ENCODE measurements at regions of chr5 and their contacts with region 1.

Region 1: DNA sequence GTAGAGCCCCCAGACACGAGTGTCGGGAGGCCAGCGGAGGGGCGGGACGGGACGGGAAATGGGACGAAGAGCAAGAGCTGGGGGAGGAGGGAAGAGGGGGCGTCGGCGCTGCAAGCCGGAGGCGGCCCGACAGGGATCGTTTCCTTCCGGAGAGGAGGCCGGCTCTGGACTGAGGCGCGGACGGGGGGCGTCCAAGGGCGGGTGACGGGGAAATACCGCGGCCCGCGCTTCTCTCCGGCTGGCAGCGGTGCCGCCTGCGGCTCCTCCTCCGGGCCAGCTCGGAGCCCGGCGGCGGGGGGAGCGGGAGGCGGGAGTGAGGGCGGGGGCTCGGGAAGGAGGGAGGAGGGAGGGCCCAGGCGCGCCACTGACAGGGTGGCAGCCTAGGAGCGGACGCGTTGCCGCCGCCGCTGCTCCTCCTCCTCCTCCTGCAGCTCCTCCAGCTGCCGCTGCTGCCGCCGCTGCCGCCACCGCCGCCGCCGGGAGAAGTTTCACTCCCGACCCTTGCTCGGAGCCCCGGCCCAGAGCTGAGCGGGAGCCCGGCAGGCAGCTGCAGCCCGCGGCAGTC is at the start of gene CHSY3:
- DNase-seq: peak; percentile 31 to 71 (median 66)
- H3K4me3 ChIP-seq: peak within 1 kb of the TSS; percentile 56
- H3K27ac ChIP-seq: peak within 1 kb of the TSS in 1 of 2 donors; percentile 41
- H3K4me1 ChIP-seq: peaks cover 4% of the 10 kb centered on the region
- H3K27me3 ChIP-seq: no peaks in the 10 kb centered on the region
- CTCF ChIP-seq: no peak
- EP300 ChIP-seq: no peak
- POLR2A ChIP-seq: no peak
- total RNA-seq, gene CHSY3: 0.13 to 2.2 (median 0.67) TPM

Region 2: DNA sequence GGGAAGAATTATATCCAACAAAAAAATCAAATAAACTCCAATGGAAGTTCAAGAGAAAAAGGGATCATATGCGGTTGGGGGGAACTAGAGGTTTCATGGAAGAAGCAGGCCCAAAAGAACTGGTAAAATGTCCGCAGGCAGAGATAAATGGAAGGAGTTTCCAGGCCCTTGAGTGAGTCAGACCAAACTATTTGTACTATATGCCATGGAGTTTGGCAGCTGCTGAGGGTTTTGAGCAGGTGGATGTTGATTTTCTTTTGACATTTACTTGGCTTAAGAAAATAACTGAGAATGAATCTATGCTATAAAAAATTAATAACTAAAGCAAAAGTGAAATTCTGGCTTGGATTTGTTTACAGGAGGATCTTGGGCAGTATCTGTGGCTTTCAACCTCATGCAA is 122.6 kb before region 1 on chr5:
- intact Hi-C with region 1: no loop called
- DNase-seq: no peak
- H3K4me3 ChIP-seq: no peak overlapping the region
- H3K27ac ChIP-seq: no peak overlapping the region
- H3K4me1 ChIP-seq: no peaks in the 10 kb centered on the region
- H3K27me3 ChIP-seq: no peaks in the 10 kb centered on the region
- CTCF ChIP-seq: no peak
- EP300 ChIP-seq: no peak
- POLR2A ChIP-seq: no peak

Region 3: DNA sequence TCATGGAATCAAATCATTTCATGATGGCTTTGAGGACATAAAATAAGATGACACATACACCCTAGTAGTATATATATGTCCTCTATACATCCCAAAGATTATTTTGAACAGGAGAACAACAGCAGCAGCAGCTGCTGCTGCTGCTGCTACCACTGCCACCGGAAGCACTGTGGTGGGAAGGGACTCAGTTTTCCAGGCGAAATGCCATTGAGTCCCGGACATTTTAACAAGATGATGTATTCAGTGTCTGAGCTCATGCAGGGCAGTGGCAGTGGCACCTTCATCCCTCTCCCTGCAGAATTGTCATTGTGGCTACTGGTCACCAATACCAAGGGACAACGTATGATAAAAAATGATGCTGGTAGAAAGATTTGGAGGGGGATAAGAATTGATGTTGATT is 151.4 kb after region 1 on chr5:
- intact Hi-C with region 1: no loop called
- DNase-seq: no peak
- H3K4me3 ChIP-seq: no peak overlapping the region
- H3K27ac ChIP-seq: no peak overlapping the region
- H3K4me1 ChIP-seq: no peaks in the 10 kb centered on the region
- H3K27me3 ChIP-seq: no peaks in the 10 kb centered on the region
- CTCF ChIP-seq: no peak
- EP300 ChIP-seq: no peak
- POLR2A ChIP-seq: no peak

Region 4: GRCh38 chr5:131109540-131110255 is 1205.5 kb after region 1 on chr5:
- intact Hi-C with region 1: loop called in 1 of 4 experiments (anchors 10 kb)
- DNase-seq: no peak
- H3K4me3 ChIP-seq: no peak overlapping the region
- H3K27ac ChIP-seq: no peak overlapping the region
- H3K4me1 ChIP-seq: no peaks in the 10 kb centered on the region
- H3K27me3 ChIP-seq: no peaks in the 10 kb centered on the region
- CTCF ChIP-seq: peak in 2 of 3 donors; percentile 18 to 31
- EP300 ChIP-seq: no peak
- POLR2A ChIP-seq: no peak